ENCODE measurements at regions of chr22 and their contacts with region 1.

Region 1: DNA sequence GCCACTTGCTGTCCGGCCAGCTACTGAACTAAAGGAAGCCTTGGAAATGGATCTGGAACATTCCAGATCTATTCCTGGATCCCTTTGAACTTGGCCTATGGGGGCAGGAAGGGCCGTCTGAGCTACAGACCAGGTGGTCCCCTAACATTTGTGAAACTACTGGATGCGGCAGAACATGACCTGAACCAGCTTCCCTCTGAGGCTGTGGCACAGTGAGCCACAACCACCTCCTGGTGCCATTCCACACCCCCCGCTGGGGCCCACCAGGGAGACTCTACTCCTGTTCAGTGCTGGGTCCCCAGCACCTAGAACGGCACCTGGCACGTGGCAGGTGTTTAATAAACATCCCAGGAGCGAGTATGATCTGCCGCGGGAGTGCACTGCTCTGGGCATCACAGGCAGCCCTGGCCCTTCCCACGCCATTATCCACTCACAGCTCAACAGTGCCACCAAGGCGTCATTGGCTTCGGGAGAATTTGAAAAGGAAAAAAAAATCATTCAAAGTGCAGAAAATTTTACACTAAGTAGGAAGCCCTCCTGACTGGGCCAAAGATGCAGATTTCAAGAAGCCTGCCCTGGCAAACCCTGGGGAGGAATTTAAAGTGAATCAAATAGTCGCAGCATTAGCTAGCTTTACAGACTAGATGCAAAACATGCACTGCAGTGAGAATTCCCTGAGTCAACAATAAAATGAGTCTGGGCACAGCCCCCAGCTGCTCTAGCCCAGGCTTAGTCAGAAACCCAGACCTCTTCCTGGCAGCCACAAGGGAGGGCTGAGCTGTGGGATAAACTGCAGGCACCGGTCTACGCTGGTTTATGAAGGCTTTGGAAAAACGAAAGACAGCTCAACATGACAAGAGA is 14.3 kb upstream of the EFCAB6 start:
- DNase-seq: no peak
- ATAC-seq: no peak
- H3K4me3 ChIP-seq: no peak overlapping the region
- H3K27ac ChIP-seq: no peak overlapping the region
- H3K4me1 ChIP-seq: peaks cover 15 to 18% of the 10 kb centered on the region in 2 donors
- H3K27me3 ChIP-seq: peaks cover 20 to 23% (median 22%) of the 10 kb centered on the region in 3 donors
- CTCF ChIP-seq: peak in 1 of 5 experiments; percentile 17
- POLR2A ChIP-seq: no peak

Region 2: DNA sequence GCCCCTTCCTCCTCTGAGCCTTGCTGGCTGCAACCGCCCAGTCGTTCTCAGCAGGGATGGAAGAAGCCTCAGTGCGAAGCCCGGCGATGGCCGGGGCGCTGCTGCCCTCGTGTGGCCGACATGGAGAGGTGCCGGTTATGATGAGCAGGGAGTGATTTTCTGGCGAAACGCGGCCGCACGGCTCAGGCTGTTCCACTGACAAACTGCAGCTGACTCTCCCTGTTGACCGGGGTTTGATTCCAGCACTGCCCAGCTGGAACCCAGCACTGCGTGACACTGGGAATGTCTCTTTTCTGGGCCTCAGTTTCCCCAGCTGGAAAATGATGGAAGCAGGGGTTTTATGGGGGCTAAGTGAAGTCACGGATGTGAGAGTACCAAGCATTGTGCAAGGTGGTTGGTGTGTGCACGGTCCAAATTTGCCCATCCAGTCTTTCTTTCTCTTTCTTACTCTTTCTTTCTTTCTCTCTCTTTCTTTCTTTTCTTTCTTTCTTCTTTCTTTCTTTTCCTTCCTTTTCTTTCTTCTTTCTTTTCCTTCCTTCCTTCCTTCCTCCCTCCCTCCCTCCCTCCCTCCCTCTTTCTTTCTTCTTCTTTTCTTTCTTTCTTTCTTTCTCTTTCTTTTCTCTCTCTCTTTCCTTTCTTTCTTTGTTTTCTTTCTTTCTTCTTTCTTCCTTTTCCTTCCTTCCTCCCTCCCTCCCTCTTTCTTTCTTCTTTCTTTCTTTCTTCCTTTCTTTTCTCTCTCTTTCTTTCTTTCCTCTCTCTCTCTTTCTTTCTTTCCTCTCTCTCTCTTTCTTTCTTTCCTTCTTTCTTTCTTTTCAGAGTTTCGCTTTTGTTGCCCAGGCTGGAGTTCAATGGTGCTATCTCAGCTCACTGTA is 440.4 kb before region 1 on chr22:
- in situ Hi-C with region 1: loop called in 1 of 4 experiments (anchors 25 kb)
- intact Hi-C with region 1: loop called (anchors 2 kb)
- DNase-seq: peak; percentile 39 to 40
- ATAC-seq: peak; percentile 60 to 75
- H3K4me3 ChIP-seq: no peak overlapping the region
- H3K27ac ChIP-seq: no peak overlapping the region
- H3K4me1 ChIP-seq: no peaks in the 10 kb centered on the region
- H3K27me3 ChIP-seq: peaks cover 15 to 28% (median 17%) of the 10 kb centered on the region in 3 donors
- CTCF ChIP-seq: peak; percentile 59 to 88 (median 72)
- POLR2A ChIP-seq: no peak

Region 3: GRCh38 chr22:43848366-43849171 is 22.2 kb after region 1 on chr22:
- in situ Hi-C with region 1: no loop called
- intact Hi-C with region 1: loop called (anchors 1 kb)
- DNase-seq: peak in 1 of 2 donors; percentile 9
- ATAC-seq: no peak
- H3K4me3 ChIP-seq: no peak overlapping the region
- H3K27ac ChIP-seq: no peak overlapping the region
- H3K4me1 ChIP-seq: no peaks in the 10 kb centered on the region
- H3K27me3 ChIP-seq: peaks cover 0 to 19% (median 17%) of the 10 kb centered on the region in 3 donors
- CTCF ChIP-seq: peak in 4 of 5 experiments; percentile 10 to 25 (median 20)
- POLR2A ChIP-seq: no peak

Region 4: GRCh38 chr22:43867839-43868652 is 41.7 kb after region 1 on chr22:
- in situ Hi-C with region 1: no loop called
- intact Hi-C with region 1: no loop called
- DNase-seq: peak in 1 of 2 donors; percentile 15
- ATAC-seq: no peak
- H3K4me3 ChIP-seq: no peak overlapping the region
- H3K27ac ChIP-seq: no peak overlapping the region
- H3K4me1 ChIP-seq: no peaks in the 10 kb centered on the region
- H3K27me3 ChIP-seq: peaks cover 17 to 18% (median 17%) of the 10 kb centered on the region in 3 donors
- CTCF ChIP-seq: no peak
- POLR2A ChIP-seq: no peak

Region 5: GRCh38 chr22:43884600-43885325 is 58.4 kb after region 1 on chr22:
- in situ Hi-C with region 1: no loop called
- intact Hi-C with region 1: loop called (anchors 1 kb)
- DNase-seq: peak; percentile 18 to 27
- ATAC-seq: peak in 1 of 2 donors; percentile 64
- H3K4me3 ChIP-seq: no peak overlapping the region
- H3K27ac ChIP-seq: no peak overlapping the region
- H3K4me1 ChIP-seq: no peaks in the 10 kb centered on the region
- H3K27me3 ChIP-seq: peaks cover 4 to 24% (median 19%) of the 10 kb centered on the region in 3 donors
- CTCF ChIP-seq: peak in 4 of 5 experiments; percentile 33 to 75 (median 64)
- POLR2A ChIP-seq: no peak

Region 6: DNA sequence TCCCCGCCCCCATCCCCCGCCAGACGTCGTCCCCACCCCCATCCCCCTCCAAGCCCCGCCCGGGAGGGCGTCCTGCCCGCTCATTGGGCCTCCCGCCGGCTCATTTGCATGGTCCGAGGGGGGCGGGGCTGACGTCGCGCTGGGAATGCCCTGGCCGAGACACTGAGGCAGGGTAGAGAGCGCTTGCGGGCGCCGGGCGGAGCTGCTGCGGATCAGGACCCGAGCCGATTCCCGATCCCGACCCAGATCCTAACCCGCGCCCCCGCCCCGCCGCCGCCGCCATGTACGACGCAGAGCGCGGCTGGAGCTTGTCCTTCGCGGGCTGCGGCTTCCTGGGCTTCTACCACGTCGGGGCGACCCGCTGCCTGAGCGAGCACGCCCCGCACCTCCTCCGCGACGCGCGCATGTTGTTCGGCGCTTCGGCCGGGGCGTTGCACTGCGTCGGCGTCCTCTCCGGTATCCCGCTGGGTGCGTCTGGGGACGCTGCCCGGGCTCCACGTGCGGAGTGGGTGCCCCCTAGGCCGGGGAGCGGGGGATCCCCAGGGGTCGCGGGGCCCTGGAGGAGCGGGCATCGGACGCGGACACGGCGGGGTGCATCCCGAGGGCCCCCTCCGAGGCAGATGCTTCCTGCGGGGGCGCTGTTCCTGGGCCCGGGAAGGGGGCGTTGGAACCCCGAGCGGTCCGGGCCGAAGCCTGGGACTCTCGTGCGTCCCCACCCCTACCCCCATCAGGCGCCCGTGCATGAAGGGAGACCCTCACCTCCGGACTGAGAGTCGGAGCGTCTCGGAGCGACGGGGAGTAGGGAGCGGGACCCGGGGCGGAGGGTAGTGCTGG is 97.5 kb after region 1 on chr22 and contains the start of gene PNPLA3:
- in situ Hi-C with region 1: no loop called
- intact Hi-C with region 1: loop called (anchors 5 kb)
- DNase-seq: peak; percentile 86
- ATAC-seq: peak; percentile 64 to 79
- H3K4me3 ChIP-seq: peak within 1 kb of the TSS; percentile 58 to 80 (median 68)
- H3K27ac ChIP-seq: peak within 1 kb of the TSS; percentile 57 to 80 (median 65)
- H3K4me1 ChIP-seq: peaks cover 7 to 24% of the 10 kb centered on the region in 2 donors
- H3K27me3 ChIP-seq: peaks cover 0 to 9% (median 0%) of the 10 kb centered on the region in 3 donors
- CTCF ChIP-seq: peak in 2 of 5 experiments; percentile 13 to 35
- POLR2A ChIP-seq: peak; percentile 83 to 87
- total RNA-seq, gene PNPLA3: 0.58 to 2.3 (median 1.4) TPM in 3 of 4 donors, not detected in the other

Region 7: DNA sequence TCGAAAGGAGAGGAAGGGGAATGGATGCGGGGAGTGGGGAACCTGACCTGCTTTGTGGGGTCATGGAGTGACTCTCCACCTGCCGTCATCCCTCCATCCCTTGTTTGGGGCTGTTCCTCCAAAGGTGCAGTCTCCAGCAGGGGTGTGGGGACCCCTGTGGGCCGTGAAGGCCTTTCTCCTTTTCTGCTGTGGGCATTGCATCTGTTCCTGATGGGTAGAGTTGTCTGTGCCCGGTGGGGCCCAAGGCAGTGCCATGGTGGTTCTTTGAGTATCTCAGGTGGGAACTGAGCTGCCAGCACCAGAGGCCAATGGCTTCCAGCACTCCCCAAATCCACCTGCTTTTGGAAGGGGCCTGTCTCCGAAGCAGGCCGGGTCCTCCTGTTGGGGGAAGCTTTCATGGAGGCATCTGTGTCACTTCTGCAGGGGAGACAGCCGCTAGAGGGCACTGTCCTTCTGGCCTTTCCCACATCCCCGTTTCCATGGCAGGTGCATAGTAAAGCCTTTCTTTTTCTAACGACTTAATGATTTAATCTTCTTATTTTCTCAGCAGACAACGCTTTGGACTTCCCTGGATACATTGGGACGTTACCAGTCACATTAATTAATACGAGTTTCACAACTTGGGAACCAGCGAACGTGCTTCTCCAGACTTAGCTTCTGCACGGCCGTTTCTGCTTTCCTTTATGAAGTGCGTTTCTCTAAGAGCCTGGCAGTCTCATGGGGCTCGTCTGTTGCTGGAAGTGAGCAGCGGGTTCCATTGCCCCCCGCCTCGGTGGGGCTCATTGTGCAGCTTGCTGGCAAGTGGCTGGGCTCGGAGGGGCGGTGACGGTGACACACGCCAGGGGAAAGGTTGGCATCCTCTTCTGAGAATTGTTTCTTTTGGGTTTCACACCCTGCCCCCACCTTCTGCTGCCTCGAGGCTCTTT is 254.8 kb after region 1 on chr22:
- in situ Hi-C with region 1: loop called in 1 of 4 experiments (anchors 25 kb)
- intact Hi-C with region 1: loop called (anchors 5 kb)
- DNase-seq: peak; percentile 45 to 59
- ATAC-seq: no peak
- H3K4me3 ChIP-seq: no peak overlapping the region
- H3K27ac ChIP-seq: peak overlapping the region in 1 of 4 donors; percentile 39
- H3K4me1 ChIP-seq: peaks cover 41 to 49% of the 10 kb centered on the region in 2 donors
- H3K27me3 ChIP-seq: no peaks in the 10 kb centered on the region
- CTCF ChIP-seq: peak; percentile 46 to 87 (median 79)
- POLR2A ChIP-seq: no peak

Region 8: GRCh38 chr22:44497218-44497904 is 671.0 kb after region 1 on chr22:
- in situ Hi-C with region 1: no loop called
- intact Hi-C with region 1: loop called (anchors 5 kb)
- DNase-seq: no peak
- ATAC-seq: peak; percentile 8 to 13
- H3K4me3 ChIP-seq: peak overlapping the region; percentile 57 to 90 (median 68)
- H3K27ac ChIP-seq: peak overlapping the region; percentile 63 to 88 (median 82)
- H3K4me1 ChIP-seq: peaks cover 15% of the 10 kb centered on the region in 2 donors
- H3K27me3 ChIP-seq: peaks cover 0 to 4% (median 0%) of the 10 kb centered on the region in 3 donors
- CTCF ChIP-seq: no peak
- POLR2A ChIP-seq: no peak

Measured in gastrocnemius medialis (tissue), 4 donors.